Common myeloid progenitor, CD34-positive (primary cell): ENCODE measurements at regions of chr6 and their contacts with region 1.

Region 1: DNA sequence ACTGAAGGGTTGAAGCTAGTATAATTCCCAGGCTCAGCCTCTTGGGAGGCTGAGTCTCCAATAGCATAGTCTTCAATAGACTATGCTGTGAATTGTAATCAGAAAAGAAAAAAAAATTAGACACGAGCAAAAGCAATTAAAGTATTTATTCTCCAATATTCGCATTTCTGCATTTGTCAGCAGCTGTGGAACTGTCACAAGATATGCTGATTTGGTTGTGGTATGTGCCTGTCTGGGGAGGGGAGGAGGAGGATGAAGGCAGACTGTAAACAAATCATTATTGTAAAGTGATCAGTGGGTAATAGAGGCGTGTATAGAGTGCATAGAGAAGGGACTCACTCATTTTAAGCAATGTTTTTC is 10.1 kb upstream of the BICRAL start:
- DNase-seq: no peak
- H3K4me3 ChIP-seq: peak overlapping the region in 5 of 7 experiments; percentile 40 to 74 (median 57)
- H3K27ac ChIP-seq: peak overlapping the region; percentile 85 to 92
- H3K4me1 ChIP-seq: peaks cover 19 to 42% (median 32%) of the 10 kb centered on the region in 4 experiments
- H3K27me3 ChIP-seq: no peaks in the 10 kb centered on the region

Region 2: GRCh38 chr6:42674780-42675179 is 96.9 kb before region 1 on chr6:
- CTCF ChIA-PET with region 1: no interaction called
- POLR2A ChIA-PET with region 1: no interaction called
- DNase-seq: no peak
- H3K4me3 ChIP-seq: no peak overlapping the region
- H3K27ac ChIP-seq: no peak overlapping the region
- H3K4me1 ChIP-seq: no peaks in the 10 kb centered on the region
- H3K27me3 ChIP-seq: no peaks in the 10 kb centered on the region

Region 3: GRCh38 chr6:42726485-42727086 is 45.1 kb before region 1 on chr6:
- CTCF ChIA-PET with region 1: interaction called, 20 read pairs
- POLR2A ChIA-PET with region 1: interaction called, 4 read pairs
- DNase-seq: peak; percentile 90 to 96 (median 95)
- H3K4me3 ChIP-seq: peak overlapping the region in 6 of 7 experiments; percentile 59 to 97 (median 78)
- H3K27ac ChIP-seq: peak overlapping the region in 1 of 2 experiments; percentile 77
- H3K4me1 ChIP-seq: peaks cover 0 to 14% (median 7%) of the 10 kb centered on the region in 4 experiments
- H3K27me3 ChIP-seq: no peaks in the 10 kb centered on the region

Region 4: DNA sequence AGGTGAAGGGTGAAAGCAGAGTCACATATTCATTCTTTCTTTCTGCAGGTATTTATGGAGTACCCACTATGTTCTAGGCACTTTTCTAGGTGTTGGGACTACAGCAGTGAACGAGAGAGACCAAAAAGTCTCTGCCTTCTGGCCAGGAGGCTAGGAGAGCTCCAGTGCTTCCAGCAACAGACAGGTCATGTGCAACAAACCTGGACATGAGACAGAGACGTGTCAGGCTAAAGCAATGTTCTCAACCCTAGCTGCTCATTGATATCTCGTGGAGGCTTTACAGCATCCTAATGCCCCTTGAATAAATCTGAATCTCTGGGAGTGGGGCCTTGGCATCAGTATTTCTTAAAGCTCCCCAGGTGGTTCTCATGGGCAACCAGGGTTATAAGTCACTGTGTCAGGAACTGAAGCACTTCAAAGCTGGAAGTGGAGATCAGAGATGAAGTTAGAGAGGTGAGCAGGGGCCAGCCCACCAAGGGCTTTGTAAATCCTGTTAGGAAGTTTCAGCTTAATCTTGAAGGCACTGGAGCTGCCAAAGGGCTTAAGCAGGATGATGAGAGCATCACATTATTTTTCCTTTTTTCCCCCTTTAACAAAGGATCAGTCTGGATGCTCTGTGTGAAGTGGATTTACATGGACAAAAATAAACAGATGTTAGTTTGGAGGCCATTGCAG is 12.8 kb before region 1 on chr6:
- CTCF ChIA-PET with region 1: interaction called, 13 read pairs
- POLR2A ChIA-PET with region 1: interaction called, 4 read pairs
- DNase-seq: no peak
- H3K4me3 ChIP-seq: no peak overlapping the region
- H3K27ac ChIP-seq: no peak overlapping the region
- H3K4me1 ChIP-seq: no peaks in the 10 kb centered on the region
- H3K27me3 ChIP-seq: no peaks in the 10 kb centered on the region

Region 5: GRCh38 chr6:42782622-42783176 is 11.0 kb after region 1 on chr6:
- CTCF ChIA-PET with region 1: interaction called, 9 read pairs
- POLR2A ChIA-PET with region 1: interaction called, 52 read pairs
- DNase-seq: peak; percentile 82 to 91 (median 90)
- H3K4me3 ChIP-seq: peak overlapping the region; percentile 90 to 99 (median 97)
- H3K27ac ChIP-seq: peak overlapping the region; percentile 98 to 99
- H3K4me1 ChIP-seq: peaks cover 23 to 51% (median 36%) of the 10 kb centered on the region in 4 experiments
- H3K27me3 ChIP-seq: no peaks in the 10 kb centered on the region